ENCODE measurements at regions of chr12 and their contacts with region 1.

Region 1: DNA sequence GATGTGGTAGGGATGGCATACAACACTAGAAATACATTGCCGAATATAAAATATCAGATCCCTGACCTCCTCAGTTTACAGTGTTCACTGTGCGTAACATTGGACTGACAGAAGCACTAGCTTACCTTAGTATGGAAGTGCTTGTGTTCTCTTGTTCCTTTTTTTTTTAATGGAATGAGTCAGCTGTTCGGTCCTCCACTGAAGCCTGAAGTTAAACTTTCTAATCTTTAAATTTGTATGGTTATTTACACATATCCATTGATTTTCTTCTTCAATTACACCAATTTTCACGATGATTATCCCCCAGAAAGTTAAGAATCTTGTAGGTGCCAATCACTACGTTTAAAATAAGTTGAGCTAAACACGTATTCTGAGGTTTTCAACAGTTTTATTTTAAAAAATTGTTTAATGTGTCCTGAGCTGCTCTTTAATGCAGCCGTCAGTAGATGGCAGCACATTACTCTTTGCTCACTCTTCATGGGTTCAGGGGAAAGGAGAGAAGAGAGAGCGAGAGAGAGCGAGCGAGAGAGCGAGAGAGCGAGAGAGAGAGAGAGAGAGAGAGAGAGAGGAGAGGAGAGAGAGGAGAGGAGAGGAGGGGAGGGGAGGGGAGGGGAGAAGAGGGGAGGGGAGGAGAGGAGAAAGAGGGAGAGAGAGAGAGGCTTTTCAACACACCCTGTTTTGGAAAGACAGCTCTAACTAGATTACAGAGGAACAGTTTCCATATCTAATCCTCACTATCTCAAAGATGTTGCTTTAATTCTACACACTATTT is 134.7 kb upstream of the SCAF11 start:
- DNase-seq: peak; percentile 9 to 86 (median 53)
- ATAC-seq: peak; percentile 96
- H3K4me3 ChIP-seq: no peak overlapping the region
- H3K4me3 Mint-ChIP-seq: peak overlapping the region; percentile 7
- H3K27ac ChIP-seq: no peak overlapping the region
- H3K27ac Mint-ChIP-seq: peak overlapping the region; percentile 70
- H3K4me1 ChIP-seq: no peaks in the 10 kb centered on the region
- H3K4me1 Mint-ChIP-seq: peaks cover 4% of the 10 kb centered on the region
- H3K27me3 ChIP-seq: no peaks in the 10 kb centered on the region
- H3K27me3 Mint-ChIP-seq: peaks cover 7% of the 10 kb centered on the region
- CTCF ChIP-seq: peak; percentile 69

Region 2: DNA sequence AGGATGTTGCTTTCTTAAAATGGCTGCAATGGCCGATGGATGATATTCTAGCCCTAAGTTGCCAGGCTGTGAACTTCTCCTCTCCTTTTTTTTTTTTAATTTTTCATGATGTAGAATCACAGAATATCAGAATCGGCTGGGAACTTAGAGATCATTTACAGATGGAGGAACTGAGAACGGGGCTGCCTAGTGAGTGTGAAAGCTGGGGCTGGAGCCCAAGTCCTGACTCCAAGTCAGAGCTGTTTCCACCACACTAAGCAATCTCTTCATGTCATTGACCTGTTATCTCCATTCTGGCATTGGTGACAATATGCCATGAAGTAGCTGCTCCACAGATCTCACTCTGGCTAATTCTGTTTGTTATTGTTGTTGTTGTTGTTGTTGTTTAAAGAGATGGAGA is 22.1 kb after region 1 on chr12:
- CTCF ChIA-PET with region 1: interaction called, 14 read pairs
- POLR2A ChIA-PET with region 1: no interaction called
- intact Hi-C with region 1: no loop called
- DNase-seq: no peak
- ATAC-seq: no peak
- H3K4me3 ChIP-seq: no peak overlapping the region
- H3K4me3 Mint-ChIP-seq: no peak overlapping the region
- H3K27ac ChIP-seq: no peak overlapping the region
- H3K27ac Mint-ChIP-seq: no peak overlapping the region
- H3K4me1 ChIP-seq: no peaks in the 10 kb centered on the region
- H3K4me1 Mint-ChIP-seq: no peaks in the 10 kb centered on the region
- H3K27me3 ChIP-seq: no peaks in the 10 kb centered on the region
- H3K27me3 Mint-ChIP-seq: peaks cover 13% of the 10 kb centered on the region
- CTCF ChIP-seq: no peak

Region 3: GRCh38 chr12:46661110-46661845 is 536.2 kb after region 1 on chr12:
- CTCF ChIA-PET with region 1: no interaction called
- POLR2A ChIA-PET with region 1: no interaction called
- intact Hi-C with region 1: loop called in 1 of 2 experiments (anchors 5 kb)
- DNase-seq: peak in 2 of 9 experiments; percentile 60 to 72
- ATAC-seq: peak; percentile 69
- H3K4me3 ChIP-seq: no peak overlapping the region
- H3K4me3 Mint-ChIP-seq: no peak overlapping the region
- H3K27ac ChIP-seq: no peak overlapping the region
- H3K27ac Mint-ChIP-seq: no peak overlapping the region
- H3K4me1 ChIP-seq: peaks cover 6% of the 10 kb centered on the region
- H3K4me1 Mint-ChIP-seq: peaks cover 28% of the 10 kb centered on the region
- H3K27me3 ChIP-seq: no peaks in the 10 kb centered on the region
- H3K27me3 Mint-ChIP-seq: no peaks in the 10 kb centered on the region
- CTCF ChIP-seq: peak; percentile 61

Region 4: DNA sequence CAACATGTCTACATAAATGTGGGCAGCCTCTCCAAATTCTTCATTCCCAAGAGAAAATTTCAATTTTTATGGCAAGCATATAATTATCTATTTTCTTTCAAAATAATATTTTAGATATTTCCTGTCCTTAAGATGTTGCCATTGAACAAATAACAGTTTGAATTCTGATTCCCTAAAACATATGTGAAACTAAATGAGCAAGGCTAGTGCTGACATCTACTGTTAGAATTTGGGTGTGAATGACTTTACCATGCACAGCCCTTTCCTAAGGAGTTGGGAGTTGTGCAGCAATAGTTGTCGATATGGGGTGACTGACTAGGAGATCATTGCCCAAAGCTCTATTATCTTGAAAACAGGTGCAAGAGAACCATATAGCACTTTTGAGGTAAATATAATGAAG is 808.9 kb after region 1 on chr12:
- CTCF ChIA-PET with region 1: interaction called, 8 read pairs
- POLR2A ChIA-PET with region 1: no interaction called
- intact Hi-C with region 1: loop called in 1 of 2 experiments (anchors 10 kb)
- DNase-seq: peak in 2 of 9 experiments; percentile 14 to 43
- ATAC-seq: no peak
- H3K4me3 ChIP-seq: no peak overlapping the region
- H3K4me3 Mint-ChIP-seq: no peak overlapping the region
- H3K27ac ChIP-seq: no peak overlapping the region
- H3K27ac Mint-ChIP-seq: no peak overlapping the region
- H3K4me1 ChIP-seq: no peaks in the 10 kb centered on the region
- H3K4me1 Mint-ChIP-seq: no peaks in the 10 kb centered on the region
- H3K27me3 ChIP-seq: no peaks in the 10 kb centered on the region
- H3K27me3 Mint-ChIP-seq: peaks cover 16% of the 10 kb centered on the region
- CTCF ChIP-seq: peak; percentile 20

Region 5: GRCh38 chr12:47021298-47021697 is 896.3 kb after region 1 on chr12:
- CTCF ChIA-PET with region 1: interaction called, 10 read pairs
- POLR2A ChIA-PET with region 1: no interaction called
- intact Hi-C with region 1: loop called (anchors 1 to 2 kb)
- DNase-seq: peak in 3 of 9 experiments; percentile 11 to 70 (median 58)
- ATAC-seq: no peak
- H3K4me3 ChIP-seq: no peak overlapping the region
- H3K4me3 Mint-ChIP-seq: no peak overlapping the region
- H3K27ac ChIP-seq: no peak overlapping the region
- H3K27ac Mint-ChIP-seq: no peak overlapping the region
- H3K4me1 ChIP-seq: no peaks in the 10 kb centered on the region
- H3K4me1 Mint-ChIP-seq: no peaks in the 10 kb centered on the region
- H3K27me3 ChIP-seq: no peaks in the 10 kb centered on the region
- H3K27me3 Mint-ChIP-seq: peaks cover 16% of the 10 kb centered on the region
- CTCF ChIP-seq: peak; percentile 75

Measured in CD8-positive, alpha-beta T cell (primary cell).